HEK293 (cell line): ENCODE measurements at regions of chr19 and their contacts with region 1.

Region 1: GRCh38 chr19:46021531-46022041 is 1.3 kb downstream of the PGLYRP1 start:
- H3K4me3 ChIP-seq: no peak overlapping the region
- H3K27ac ChIP-seq: no peak overlapping the region
- H3K4me1 ChIP-seq: no peaks in the 10 kb centered on the region; the same call in 1 of the 2 replicates
- CTCF ChIP-seq: no peak

Region 2: GRCh38 chr19:45705115-45705514 is 316.5 kb before region 1 on chr19:
- CTCF ChIA-PET with region 1: no interaction called
- POLR2A ChIA-PET with region 1: no interaction called
- H3K4me3 ChIP-seq: no peak overlapping the region
- H3K27ac ChIP-seq: no peak overlapping the region
- H3K4me1 ChIP-seq: no peaks in the 10 kb centered on the region
- CTCF ChIP-seq: no peak

Region 3: GRCh38 chr19:46009530-46010510 is 11.8 kb before region 1 on chr19:
- CTCF ChIA-PET with region 1: interaction called, 47 read pairs
- POLR2A ChIA-PET with region 1: no interaction called
- H3K4me3 ChIP-seq: no peak overlapping the region
- H3K27ac ChIP-seq: no peak overlapping the region
- H3K4me1 ChIP-seq: no peaks in the 10 kb centered on the region
- CTCF ChIP-seq: peak; percentile 87

Region 4: DNA sequence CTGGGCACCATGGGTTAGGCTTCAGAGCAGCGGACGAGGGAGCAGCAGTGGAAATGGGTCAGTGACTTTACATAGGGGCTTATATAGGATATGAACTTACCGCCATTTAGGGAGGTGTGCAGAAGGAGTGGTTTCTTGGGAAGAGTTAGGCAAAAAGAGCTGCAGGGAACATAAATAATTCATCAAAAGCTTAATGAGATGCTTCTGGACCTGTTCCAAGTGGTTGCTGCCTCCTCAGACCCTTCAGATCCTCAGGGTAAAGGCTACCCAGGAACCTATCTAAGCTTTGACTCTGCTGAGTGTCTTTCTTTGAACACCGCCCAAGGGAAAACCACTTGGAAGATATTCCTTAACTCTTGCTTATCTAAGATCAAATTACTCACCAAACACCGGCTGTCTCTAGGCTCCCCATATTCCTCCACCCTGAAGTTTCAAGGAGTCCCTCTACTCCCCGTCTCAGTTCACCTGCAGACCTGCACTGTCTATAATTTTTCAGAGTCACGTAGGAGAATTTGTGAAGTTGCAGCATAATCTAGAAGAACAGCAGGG is 19.4 kb after region 1 on chr19 and contains the start of gene IGFL4:
- CTCF ChIA-PET with region 1: interaction called, 62 read pairs
- POLR2A ChIA-PET with region 1: no interaction called
- H3K4me3 ChIP-seq: no peak within 1 kb of the TSS
- H3K27ac ChIP-seq: peak within 1 kb of the TSS; percentile 53; the same call in 1 of the 2 replicates
- H3K4me1 ChIP-seq: peaks cover 16% of the 10 kb centered on the region
- CTCF ChIP-seq: no peak

Region 5: DNA sequence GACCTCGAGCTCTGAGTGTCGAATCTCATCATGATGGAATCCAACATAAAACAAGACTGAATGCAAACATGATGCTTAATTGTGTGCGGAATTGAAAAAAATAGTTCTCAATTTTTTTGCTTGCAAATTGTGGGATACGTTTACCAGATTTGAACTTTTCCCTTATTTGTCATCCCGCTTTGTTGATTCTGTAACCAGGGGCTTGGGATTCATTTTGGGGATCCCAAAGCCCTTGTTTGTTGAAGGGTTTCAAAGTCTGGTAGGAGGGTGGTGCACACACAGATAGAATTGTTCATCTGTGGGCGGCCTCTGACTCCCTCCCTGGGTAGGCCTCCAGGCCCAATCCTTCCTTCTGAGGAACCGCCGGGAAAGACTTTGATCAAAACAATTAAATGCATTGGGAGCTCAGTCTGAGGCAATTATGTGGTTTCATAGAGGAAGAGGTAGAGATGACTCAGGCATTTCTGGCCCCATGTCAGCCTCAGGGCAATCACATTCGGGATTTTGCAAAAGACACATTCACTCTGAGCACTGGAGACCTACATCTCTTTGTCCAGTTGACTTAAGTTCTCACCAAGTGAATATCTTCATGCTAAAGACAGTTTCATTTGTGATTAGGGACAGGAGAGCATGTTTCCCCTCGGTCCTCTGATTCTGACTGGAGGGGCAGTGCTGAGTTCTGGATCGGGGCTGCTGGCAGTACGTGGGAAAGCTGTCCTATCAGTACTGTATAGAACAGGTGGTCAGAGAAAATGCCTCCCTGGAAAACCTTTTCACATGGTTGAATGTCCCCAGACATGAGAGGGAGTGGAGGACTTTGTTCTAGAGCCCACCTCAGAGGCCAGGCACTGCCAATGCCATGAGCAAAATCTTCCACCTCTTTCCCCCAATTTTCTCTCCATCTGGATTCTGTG is 47.0 kb after region 1 on chr19:
- CTCF ChIA-PET with region 1: interaction called, 123 read pairs
- POLR2A ChIA-PET with region 1: no interaction called
- H3K4me3 ChIP-seq: no peak overlapping the region
- H3K27ac ChIP-seq: no peak overlapping the region
- H3K4me1 ChIP-seq: peaks cover 27% of the 10 kb centered on the region
- CTCF ChIP-seq: no peak

Region 6: GRCh38 chr19:46192992-46193650 is 171.5 kb after region 1 on chr19:
- CTCF ChIA-PET with region 1: interaction called, 10 read pairs
- POLR2A ChIA-PET with region 1: no interaction called
- H3K4me3 ChIP-seq: no peak overlapping the region
- H3K27ac ChIP-seq: no peak overlapping the region; the same call in 1 of the 2 replicates
- H3K4me1 ChIP-seq: peaks cover 10% of the 10 kb centered on the region
- CTCF ChIP-seq: no peak

Region 7: GRCh38 chr19:46748325-46749109 is 726.9 kb after region 1 on chr19:
- CTCF ChIA-PET with region 1: no interaction called
- POLR2A ChIA-PET with region 1: no interaction called
- H3K4me3 ChIP-seq: no peak overlapping the region
- H3K27ac ChIP-seq: no peak overlapping the region
- H3K4me1 ChIP-seq: peaks cover 6% of the 10 kb centered on the region
- CTCF ChIP-seq: peak; percentile 75

Region 8: DNA sequence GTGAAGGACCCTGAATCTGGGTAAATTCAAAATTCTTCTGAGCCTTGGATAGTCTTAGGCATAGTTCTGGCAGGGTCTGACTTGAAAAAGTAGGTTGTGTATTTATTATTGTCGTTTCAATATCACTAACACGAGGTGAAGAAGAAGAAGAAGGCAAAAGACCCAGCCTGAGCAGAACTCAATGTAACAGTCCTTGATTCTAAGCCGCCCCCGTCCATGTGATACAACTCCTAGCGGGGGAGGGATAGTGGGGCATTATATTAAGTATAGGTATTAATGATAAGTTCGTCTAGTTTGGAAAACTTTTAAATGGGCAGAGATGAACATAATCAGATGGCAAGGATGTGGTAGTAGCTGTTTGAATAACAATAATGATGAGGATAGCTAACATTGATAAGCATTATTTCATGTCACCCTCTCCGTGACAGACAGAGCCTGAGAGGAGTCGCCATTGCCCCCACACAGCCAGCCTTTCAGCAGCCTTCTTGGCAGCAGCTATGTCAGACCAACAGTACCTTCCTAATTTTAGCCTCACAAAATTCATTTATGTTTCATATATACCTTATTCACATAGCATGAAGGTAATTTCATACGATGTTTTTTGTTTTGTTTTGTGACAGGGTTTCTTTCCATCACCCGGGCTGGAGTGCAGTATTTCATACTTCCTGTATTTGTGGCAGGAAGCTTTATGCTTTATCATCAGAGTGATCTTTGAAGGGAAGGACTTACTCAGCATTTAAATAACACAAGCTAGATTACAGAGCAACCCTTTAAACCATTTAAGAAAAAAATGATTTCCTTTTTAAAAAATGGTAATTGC is 933.6 kb after region 1 on chr19:
- CTCF ChIA-PET with region 1: no interaction called
- POLR2A ChIA-PET with region 1: no interaction called
- H3K4me3 ChIP-seq: no peak overlapping the region
- H3K27ac ChIP-seq: no peak overlapping the region
- H3K4me1 ChIP-seq: peaks cover 11% of the 10 kb centered on the region; the same call in 1 of the 2 replicates
- CTCF ChIP-seq: no peak